CD4-positive, alpha-beta T cell (primary cell): ENCODE measurements at regions of chr2 and their contacts with region 1.

Region 1: DNA sequence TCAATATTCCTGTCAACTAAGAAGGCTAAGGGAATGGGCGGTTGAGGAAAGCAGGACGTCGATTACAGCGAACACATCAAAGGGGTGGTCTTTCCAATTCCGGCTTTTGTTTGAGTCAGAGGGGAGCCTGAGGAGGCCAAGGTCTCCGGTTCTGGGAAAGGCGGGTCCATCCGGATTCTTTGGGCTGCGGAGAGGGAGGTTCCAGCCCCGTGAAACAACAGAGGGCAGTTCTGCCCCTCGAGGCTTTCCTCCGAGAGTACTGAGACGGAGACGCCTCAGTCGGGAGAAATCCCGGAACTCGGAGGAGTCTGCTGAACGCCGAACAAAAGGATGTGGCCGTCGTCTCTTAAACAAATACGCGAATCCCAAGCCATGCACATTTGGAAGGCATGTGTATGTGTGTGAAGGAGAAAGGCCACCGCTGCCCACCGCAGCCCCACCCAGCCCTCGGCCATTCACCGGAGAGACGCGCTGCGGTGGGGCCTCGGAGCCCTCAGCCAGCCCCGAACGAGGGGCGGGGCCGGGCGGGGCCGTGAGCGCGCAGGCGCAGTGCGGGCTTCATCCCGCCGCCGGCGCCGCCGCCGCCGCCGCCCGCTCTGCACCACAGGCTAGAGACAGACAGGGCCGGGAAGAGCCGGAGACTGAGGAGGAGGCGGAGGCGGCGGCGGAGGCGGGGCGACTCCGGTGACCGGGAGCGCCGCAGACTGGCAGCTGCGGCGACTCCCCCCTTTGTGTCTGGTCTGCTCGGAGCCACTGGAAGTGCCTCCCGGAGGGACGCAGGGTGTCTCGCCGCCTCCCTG is at the start of gene BMPR2:
- DNase-seq: peak; percentile 65 to 92 (median 80)
- ATAC-seq: peak; percentile 72
- H3K4me3 ChIP-seq: peak within 1 kb of the TSS; percentile 79
- H3K4me3 Mint-ChIP-seq: peak within 1 kb of the TSS; percentile 100
- H3K27ac ChIP-seq: peak within 1 kb of the TSS; percentile 21 to 37
- H3K27ac Mint-ChIP-seq: peak within 1 kb of the TSS; percentile 87
- H3K4me1 ChIP-seq: peaks cover 20% of the 10 kb centered on the region
- H3K4me1 Mint-ChIP-seq: peaks cover 31% of the 10 kb centered on the region
- H3K27me3 ChIP-seq: no peaks in the 10 kb centered on the region
- H3K27me3 Mint-ChIP-seq: no peaks in the 10 kb centered on the region
- CTCF ChIP-seq: no peak
- total RNA-seq, gene BMPR2: 12.7 to 12.8 TPM

Region 2: DNA sequence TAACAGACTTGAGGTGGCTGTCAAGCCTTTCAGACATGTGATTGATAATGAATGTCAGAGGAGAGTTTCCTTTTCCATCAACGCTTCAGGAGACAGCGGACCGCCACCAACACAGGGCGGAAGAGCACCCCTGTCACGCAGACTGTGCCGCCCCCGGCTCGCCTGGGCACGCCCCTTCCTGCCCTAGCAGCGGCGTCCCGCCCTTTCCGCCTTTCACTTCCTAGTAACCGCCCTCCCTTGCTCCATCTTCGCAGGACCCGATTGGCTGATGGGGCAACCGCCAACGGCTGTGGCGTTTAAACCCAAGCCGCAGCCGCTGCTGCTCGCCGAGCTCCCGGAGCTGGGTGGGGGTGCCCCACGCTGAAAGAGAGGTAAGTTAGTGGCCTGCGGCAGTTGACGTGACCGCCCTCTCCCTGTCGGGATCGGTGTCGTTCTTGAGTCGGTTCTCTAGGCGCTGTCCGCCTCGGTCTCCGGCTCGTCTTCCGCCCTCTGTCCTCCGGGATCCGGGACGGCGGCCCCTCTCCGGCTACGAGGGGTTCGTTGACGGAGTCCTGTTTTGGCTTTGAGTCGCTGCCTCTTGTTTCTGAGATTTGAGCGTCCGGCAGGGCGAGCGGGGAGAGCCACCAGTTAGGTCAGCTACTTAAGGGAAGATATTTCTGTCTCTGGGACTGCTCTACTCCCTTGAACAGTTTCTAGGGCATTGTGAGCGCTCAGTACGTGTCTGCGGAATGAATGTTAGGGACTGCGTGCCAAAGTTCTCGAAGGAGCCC is 1849.7 kb before region 1 on chr2 and contains the start of gene SGO2:
- CTCF ChIA-PET with region 1: no interaction called
- POLR2A ChIA-PET with region 1: no interaction called
- intact Hi-C with region 1: loop called in 1 of 2 experiments (anchors 10 kb)
- DNase-seq: peak; percentile 90 to 98 (median 94)
- ATAC-seq: peak; percentile 99
- H3K4me3 ChIP-seq: peak within 1 kb of the TSS; percentile 71
- H3K4me3 Mint-ChIP-seq: peak within 1 kb of the TSS; percentile 96
- H3K27ac ChIP-seq: peak within 1 kb of the TSS in 1 of 2 donors; percentile 0
- H3K27ac Mint-ChIP-seq: peak within 1 kb of the TSS; percentile 83
- H3K4me1 ChIP-seq: peaks cover 9% of the 10 kb centered on the region
- H3K4me1 Mint-ChIP-seq: peaks cover 13% of the 10 kb centered on the region
- H3K27me3 ChIP-seq: no peaks in the 10 kb centered on the region
- H3K27me3 Mint-ChIP-seq: no peaks in the 10 kb centered on the region
- CTCF ChIP-seq: no peak
- total RNA-seq, gene SGO2: 0.64 to 0.74 TPM

Region 3: DNA sequence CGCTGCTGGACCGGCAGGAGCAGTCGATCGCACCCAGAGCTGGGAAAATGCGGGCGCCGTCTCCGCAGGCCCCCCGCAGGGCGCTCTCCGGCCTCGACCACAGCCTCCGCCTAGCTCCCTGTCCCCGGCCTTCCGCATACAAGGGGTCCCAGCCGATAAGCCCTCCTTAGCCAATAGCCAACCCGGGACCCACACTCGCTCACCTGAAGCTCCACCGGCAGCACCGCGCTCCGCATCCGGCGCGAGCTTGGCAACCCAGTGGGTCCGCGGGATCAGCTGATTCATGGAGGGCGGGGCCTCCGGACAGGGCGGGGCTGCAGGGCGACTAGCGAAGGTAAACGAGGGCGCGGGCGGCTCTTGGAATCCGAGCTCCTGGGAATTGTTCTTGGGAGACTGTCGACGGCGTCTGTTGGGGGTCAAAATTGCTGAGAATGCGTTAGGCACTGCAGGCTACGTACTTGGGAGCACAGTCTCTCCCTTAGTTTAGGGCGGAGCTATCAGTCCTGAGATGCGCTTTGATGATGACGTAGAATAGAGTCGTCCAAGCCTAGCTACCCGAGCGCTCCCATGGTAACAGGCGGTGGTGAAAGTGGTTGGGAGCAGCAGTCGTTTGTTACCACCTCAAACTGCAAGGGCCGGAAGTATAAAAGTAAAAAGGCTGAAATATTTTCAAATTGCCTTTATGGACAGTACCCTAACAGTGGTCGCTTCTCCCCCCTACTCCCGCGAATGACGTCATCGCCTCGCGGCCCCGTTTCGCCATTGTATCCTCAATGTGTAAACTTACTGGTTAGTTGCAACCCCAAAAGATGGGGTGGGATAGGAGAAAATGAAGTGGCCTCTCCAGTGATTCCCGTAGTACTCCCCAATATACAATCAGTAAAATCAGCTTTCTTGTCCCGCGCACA is 594.9 kb before region 1 on chr2 and contains the start of gene ALS2:
- CTCF ChIA-PET with region 1: no interaction called
- POLR2A ChIA-PET with region 1: no interaction called
- intact Hi-C with region 1: loop called in 1 of 2 experiments (anchors 5 kb)
- DNase-seq: peak; percentile 86 to 96 (median 92)
- ATAC-seq: peak; percentile 90
- H3K4me3 ChIP-seq: peak within 1 kb of the TSS; percentile 66
- H3K4me3 Mint-ChIP-seq: peak within 1 kb of the TSS; percentile 98
- H3K27ac ChIP-seq: peak within 1 kb of the TSS; percentile 77 to 88
- H3K27ac Mint-ChIP-seq: peak within 1 kb of the TSS; percentile 93
- H3K4me1 ChIP-seq: peaks cover 15% of the 10 kb centered on the region
- H3K4me1 Mint-ChIP-seq: peaks cover 20% of the 10 kb centered on the region
- H3K27me3 ChIP-seq: no peaks in the 10 kb centered on the region
- H3K27me3 Mint-ChIP-seq: no peaks in the 10 kb centered on the region
- CTCF ChIP-seq: no peak
- total RNA-seq, gene ALS2: 7.0 to 7.2 TPM

Region 4: DNA sequence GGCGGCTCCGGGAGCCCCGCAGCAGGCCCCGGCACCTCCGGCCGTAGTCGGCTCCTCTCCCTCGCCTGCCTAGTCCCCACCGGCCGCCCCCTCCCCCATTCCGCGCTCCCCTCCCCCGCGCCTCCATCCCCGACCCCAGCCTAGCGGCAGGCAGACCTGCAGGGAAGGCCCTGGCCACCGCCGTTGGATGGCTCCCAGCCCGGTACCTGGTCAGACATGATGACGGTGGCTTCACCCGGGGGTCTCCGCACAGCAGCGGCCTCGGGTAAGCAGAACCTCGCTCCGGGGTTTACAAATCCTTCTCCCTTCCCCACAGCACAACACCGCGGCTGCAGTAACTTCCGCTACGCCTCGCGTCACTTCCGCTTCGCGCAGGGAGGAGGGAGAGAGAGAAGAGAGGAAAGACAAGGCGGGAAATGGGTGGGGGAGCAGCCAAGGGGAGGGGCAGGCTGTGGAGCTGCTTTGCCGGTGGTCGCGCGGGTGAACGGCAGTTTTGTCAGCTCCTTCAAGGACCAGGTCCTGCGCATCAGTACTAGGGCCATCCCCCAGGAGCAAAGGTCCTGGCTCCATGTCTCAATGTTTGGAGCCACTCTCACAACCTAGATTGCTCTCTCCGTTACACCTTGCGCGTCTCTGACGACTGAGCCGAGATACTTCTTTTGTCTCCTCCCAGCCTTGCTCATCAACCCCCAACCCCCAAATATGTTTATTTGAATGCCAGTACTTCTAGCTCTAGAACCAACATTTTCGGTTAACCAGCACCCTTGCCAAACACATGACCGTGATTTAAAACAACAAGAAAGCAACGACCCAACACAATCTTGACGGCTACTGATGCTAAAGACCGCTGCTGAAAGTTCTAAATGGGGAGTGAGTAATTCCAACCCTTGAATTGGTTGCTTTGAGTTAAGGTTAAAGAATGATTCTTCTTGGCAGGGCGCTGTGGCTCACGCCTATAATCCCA is 137.3 kb before region 1 on chr2 and contains the start of gene SUMO1:
- CTCF ChIA-PET with region 1: no interaction called
- POLR2A ChIA-PET with region 1: no interaction called
- intact Hi-C with region 1: loop called (anchors 10 kb)
- DNase-seq: peak; percentile 79 to 95 (median 91)
- ATAC-seq: peak; percentile 92
- H3K4me3 ChIP-seq: peak within 1 kb of the TSS; percentile 85
- H3K4me3 Mint-ChIP-seq: peak within 1 kb of the TSS; percentile 98
- H3K27ac ChIP-seq: peak within 1 kb of the TSS; percentile 81 to 88
- H3K27ac Mint-ChIP-seq: peak within 1 kb of the TSS; percentile 98
- H3K4me1 ChIP-seq: peaks cover 23% of the 10 kb centered on the region
- H3K4me1 Mint-ChIP-seq: peaks cover 43% of the 10 kb centered on the region
- H3K27me3 ChIP-seq: no peaks in the 10 kb centered on the region
- H3K27me3 Mint-ChIP-seq: no peaks in the 10 kb centered on the region
- CTCF ChIP-seq: no peak
- total RNA-seq, gene SUMO1: 72.1 to 72.9 TPM

Region 5: GRCh38 chr2:202299712-202300111 is 76.1 kb before region 1 on chr2:
- CTCF ChIA-PET with region 1: no interaction called
- POLR2A ChIA-PET with region 1: no interaction called
- intact Hi-C with region 1: loop called in 1 of 2 experiments (anchors 10 kb)
- DNase-seq: no peak
- ATAC-seq: no peak
- H3K4me3 ChIP-seq: no peak overlapping the region
- H3K4me3 Mint-ChIP-seq: no peak overlapping the region
- H3K27ac ChIP-seq: no peak overlapping the region
- H3K27ac Mint-ChIP-seq: no peak overlapping the region
- H3K4me1 ChIP-seq: no peaks in the 10 kb centered on the region
- H3K4me1 Mint-ChIP-seq: no peaks in the 10 kb centered on the region
- H3K27me3 ChIP-seq: no peaks in the 10 kb centered on the region
- H3K27me3 Mint-ChIP-seq: no peaks in the 10 kb centered on the region
- CTCF ChIP-seq: no peak